ENCODE measurements at regions of chr7 and their contacts with region 1.

Region 1: DNA sequence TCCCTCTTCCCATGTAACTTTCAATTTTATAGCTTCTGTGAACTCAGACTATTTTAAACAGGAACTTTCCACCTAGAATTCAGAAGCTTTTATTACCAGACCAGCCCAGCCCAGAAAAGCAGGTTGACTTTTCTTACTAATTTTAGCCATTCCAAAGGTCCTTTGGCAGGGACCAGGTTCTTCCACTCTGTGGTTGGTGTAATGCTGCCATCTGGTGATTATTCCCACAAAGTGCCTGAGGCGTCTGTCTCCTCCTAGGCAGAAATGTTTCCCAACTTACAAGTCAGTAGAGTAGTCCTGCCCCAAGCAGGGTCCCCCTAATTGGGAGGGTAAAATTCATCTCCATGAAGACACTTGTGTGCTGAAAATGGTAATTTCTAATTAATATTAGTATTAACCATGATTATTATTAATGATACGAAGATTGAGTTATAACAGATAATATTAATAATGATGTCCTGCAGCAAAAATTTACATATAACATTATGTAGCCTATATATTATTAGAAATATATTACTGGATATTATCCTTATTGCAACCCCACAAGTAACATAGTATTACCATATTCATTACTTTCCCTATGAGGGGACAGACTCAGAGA is 53.0 kb upstream of the PPP1R17 start:
- DNase-seq: peak; percentile 56
- ATAC-seq: peak; percentile 91
- H3K4me3 ChIP-seq: no peak overlapping the region
- H3K27ac ChIP-seq: no peak overlapping the region
- H3K4me1 ChIP-seq: no peaks in the 10 kb centered on the region
- H3K27me3 ChIP-seq: no peaks in the 10 kb centered on the region
- CTCF ChIP-seq: peak; percentile 77
- EP300 ChIP-seq: no peak
- POLR2A ChIP-seq: no peak
- RAD21 ChIP-seq: peak; percentile 70

Region 2: GRCh38 chr7:31134246-31135188 is 499.5 kb before region 1 on chr7:
- CTCF ChIA-PET with region 1: no interaction called
- POLR2A ChIA-PET with region 1: no interaction called
- in situ Hi-C with region 1: no loop called
- intact Hi-C with region 1: loop called (anchors 1 kb)
- DNase-seq: peak; percentile 58
- ATAC-seq: peak; percentile 100
- H3K4me3 ChIP-seq: no peak overlapping the region
- H3K27ac ChIP-seq: no peak overlapping the region
- H3K4me1 ChIP-seq: no peaks in the 10 kb centered on the region
- H3K27me3 ChIP-seq: no peaks in the 10 kb centered on the region; a peak in 1 of 5 replicates
- CTCF ChIP-seq: peak; percentile 90
- EP300 ChIP-seq: no peak
- POLR2A ChIP-seq: no peak
- RAD21 ChIP-seq: peak; percentile 26; the same call in 1 of the 2 replicates

Region 3: GRCh38 chr7:31192986-31193385 is 441.0 kb before region 1 on chr7:
- CTCF ChIA-PET with region 1: interaction called, 4 read pairs
- POLR2A ChIA-PET with region 1: no interaction called
- in situ Hi-C with region 1: loop called (anchors 25 kb)
- intact Hi-C with region 1: loop called (anchors 1 kb)
- DNase-seq: peak; percentile 35
- ATAC-seq: peak; percentile 99
- H3K4me3 ChIP-seq: no peak overlapping the region
- H3K27ac ChIP-seq: no peak overlapping the region
- H3K4me1 ChIP-seq: no peaks in the 10 kb centered on the region
- H3K27me3 ChIP-seq: no peaks in the 10 kb centered on the region
- CTCF ChIP-seq: peak; percentile 87
- EP300 ChIP-seq: no peak
- POLR2A ChIP-seq: no peak
- RAD21 ChIP-seq: peak; percentile 65

Region 4: GRCh38 chr7:31373337-31374289 is 260.4 kb before region 1 on chr7:
- CTCF ChIA-PET with region 1: interaction called, 3 read pairs
- POLR2A ChIA-PET with region 1: no interaction called
- in situ Hi-C with region 1: loop called (anchors 10 kb)
- intact Hi-C with region 1: loop called (anchors 1 kb)
- DNase-seq: peak; percentile 34
- ATAC-seq: peak; percentile 96
- H3K4me3 ChIP-seq: no peak overlapping the region
- H3K27ac ChIP-seq: no peak overlapping the region
- H3K4me1 ChIP-seq: no peaks in the 10 kb centered on the region
- H3K27me3 ChIP-seq: peaks cover 0 to 8% of the 10 kb centered on the region in 2 experiments; a peak in 1 of 5 replicates
- CTCF ChIP-seq: peak; percentile 64
- EP300 ChIP-seq: no peak
- POLR2A ChIP-seq: no peak
- RAD21 ChIP-seq: no peak

Region 5: DNA sequence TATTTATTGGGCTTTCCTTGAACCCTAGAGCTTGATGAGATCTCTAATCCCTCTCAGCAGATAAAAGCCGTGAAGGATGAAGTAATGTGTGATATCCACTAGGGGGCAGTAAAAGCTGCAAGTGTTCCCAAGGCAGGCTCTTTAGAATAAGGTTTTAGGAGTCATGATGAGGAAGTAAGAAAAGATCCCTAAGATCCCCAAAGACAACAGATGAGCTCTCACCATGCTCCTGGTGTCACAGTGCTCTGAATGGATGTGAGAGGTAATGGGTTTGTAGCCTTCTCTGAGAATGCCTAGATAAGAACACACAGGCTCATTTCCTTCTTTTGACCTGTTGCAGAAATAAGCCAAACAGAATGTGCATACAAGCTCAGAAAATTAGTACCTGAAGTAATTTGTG is 190.5 kb before region 1 on chr7:
- CTCF ChIA-PET with region 1: interaction called, 16 read pairs
- POLR2A ChIA-PET with region 1: no interaction called
- in situ Hi-C with region 1: no loop called
- intact Hi-C with region 1: loop called (anchors 1 kb)
- DNase-seq: peak; percentile 26
- ATAC-seq: peak; percentile 69
- H3K4me3 ChIP-seq: no peak overlapping the region
- H3K27ac ChIP-seq: no peak overlapping the region
- H3K4me1 ChIP-seq: no peaks in the 10 kb centered on the region
- H3K27me3 ChIP-seq: 0 out of 5 replicates have a peak, but pooled peaks cover 0 to 1% of the 10 kb centered on the region in 2 experiments
- CTCF ChIP-seq: peak; percentile 70
- EP300 ChIP-seq: no peak
- POLR2A ChIP-seq: no peak
- RAD21 ChIP-seq: no peak